B cell (primary cell): ENCODE measurements at regions of chr18 and their contacts with region 1.

Region 1: DNA sequence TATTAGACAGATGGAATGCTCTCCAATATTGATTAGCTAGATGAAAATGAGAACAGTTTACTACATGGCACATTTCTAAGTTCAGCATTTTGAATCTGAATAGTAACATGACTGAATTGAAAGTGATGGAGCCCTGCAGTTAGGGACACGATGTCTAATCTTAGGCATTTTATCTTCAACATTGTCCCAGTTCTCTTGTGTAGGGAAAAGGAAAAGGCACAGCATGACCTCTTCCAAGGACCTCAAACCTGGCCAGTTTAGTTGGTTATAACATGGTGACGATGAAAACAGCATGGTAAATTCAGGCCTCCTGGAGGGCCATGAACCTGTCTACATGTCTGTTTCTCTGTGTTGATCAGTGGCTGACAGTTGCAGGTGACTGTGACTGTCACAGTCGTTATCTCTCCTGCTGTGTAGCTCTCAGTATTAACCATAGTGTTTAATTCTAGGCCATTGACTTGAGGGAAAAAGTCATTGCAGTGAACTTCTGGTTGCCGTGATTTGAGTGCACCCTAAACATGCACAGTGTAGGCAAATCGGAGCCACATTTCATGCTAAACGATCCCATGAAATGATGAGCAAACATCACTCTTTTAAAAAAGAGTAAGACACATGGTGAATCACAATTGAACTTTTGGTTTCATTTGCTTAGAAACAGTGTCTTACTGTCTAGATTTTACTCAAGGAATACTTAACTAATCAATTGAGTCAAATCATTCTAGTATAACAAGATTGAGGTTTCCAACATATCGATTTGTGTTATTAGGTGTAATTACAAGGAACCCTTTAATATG is 129.7 kb downstream of the PHLPP1 start:
- DNase-seq: no peak
- ATAC-seq: no peak
- H3K4me3 ChIP-seq: no peak overlapping the region
- H3K4me3 Mint-ChIP-seq: peak overlapping the region; percentile 29
- H3K27ac ChIP-seq: no peak overlapping the region
- H3K27ac Mint-ChIP-seq: no peak overlapping the region
- H3K4me1 ChIP-seq: no peaks in the 10 kb centered on the region
- H3K4me1 Mint-ChIP-seq: peaks cover 15% of the 10 kb centered on the region
- H3K27me3 ChIP-seq: no peaks in the 10 kb centered on the region
- H3K27me3 Mint-ChIP-seq: no peaks in the 10 kb centered on the region
- CTCF ChIP-seq: no peak

Region 2: GRCh38 chr18:62834715-62835114 is 10.3 kb before region 1 on chr18:
- CTCF ChIA-PET with region 1: no interaction called
- POLR2A ChIA-PET with region 1: interaction called, 14 read pairs
- intact Hi-C with region 1: no loop called
- DNase-seq: no peak
- ATAC-seq: no peak
- H3K4me3 ChIP-seq: no peak overlapping the region
- H3K4me3 Mint-ChIP-seq: no peak overlapping the region
- H3K27ac ChIP-seq: no peak overlapping the region
- H3K27ac Mint-ChIP-seq: no peak overlapping the region
- H3K4me1 ChIP-seq: peaks cover 5 to 17% of the 10 kb centered on the region in 2 donors
- H3K4me1 Mint-ChIP-seq: peaks cover 32% of the 10 kb centered on the region
- H3K27me3 ChIP-seq: no peaks in the 10 kb centered on the region
- H3K27me3 Mint-ChIP-seq: no peaks in the 10 kb centered on the region
- CTCF ChIP-seq: no peak

Region 3: GRCh38 chr18:62938487-62938886 is 93.4 kb after region 1 on chr18:
- CTCF ChIA-PET with region 1: no interaction called
- POLR2A ChIA-PET with region 1: no interaction called
- intact Hi-C with region 1: no loop called
- DNase-seq: peak; percentile 32
- ATAC-seq: no peak
- H3K4me3 ChIP-seq: no peak overlapping the region
- H3K4me3 Mint-ChIP-seq: no peak overlapping the region
- H3K27ac ChIP-seq: no peak overlapping the region
- H3K27ac Mint-ChIP-seq: no peak overlapping the region
- H3K4me1 ChIP-seq: peaks cover 6 to 14% of the 10 kb centered on the region in 2 donors
- H3K4me1 Mint-ChIP-seq: peaks cover 20% of the 10 kb centered on the region
- H3K27me3 ChIP-seq: no peaks in the 10 kb centered on the region
- H3K27me3 Mint-ChIP-seq: no peaks in the 10 kb centered on the region
- CTCF ChIP-seq: no peak